AG04449 (cell line): ENCODE measurements at regions of chr12 and their contacts with region 1.

Region 1: GRCh38 chr12:101839324-101840283 is 8.8 kb upstream of the GNPTAB start:
- DNase-seq: no peak
- H3K4me3 ChIP-seq: no peak overlapping the region
- CTCF ChIP-seq: peak; percentile 82

Region 2: GRCh38 chr12:101759396-101760047 is 80.1 kb before region 1 on chr12:
- CTCF ChIA-PET with region 1: interaction called, 23 read pairs
- POLR2A ChIA-PET with region 1: no interaction called
- DNase-seq: no peak
- H3K4me3 ChIP-seq: no peak overlapping the region
- CTCF ChIP-seq: peak; percentile 55

Region 3: GRCh38 chr12:101783150-101783549 is 56.5 kb before region 1 on chr12:
- CTCF ChIA-PET with region 1: interaction called, 47 read pairs
- POLR2A ChIA-PET with region 1: no interaction called
- DNase-seq: no peak
- H3K4me3 ChIP-seq: no peak overlapping the region
- CTCF ChIP-seq: no peak

Region 4: DNA sequence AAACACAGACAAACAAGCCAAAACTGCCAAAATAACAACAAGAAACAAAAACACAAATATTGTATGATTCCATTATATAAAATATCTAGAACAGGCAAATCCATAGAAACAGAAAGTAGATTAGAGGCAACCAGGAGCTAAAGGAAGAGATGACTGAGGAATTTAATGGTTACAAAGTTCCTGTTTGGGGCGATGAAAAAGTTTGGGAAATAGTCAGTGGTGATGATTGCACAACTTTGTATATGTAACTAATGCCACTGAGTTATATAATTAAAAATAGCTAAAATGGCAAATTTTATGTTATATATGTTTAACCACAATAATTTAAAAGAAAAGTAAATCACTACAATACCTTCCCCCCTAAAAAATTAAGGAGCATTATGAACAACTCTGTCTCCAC is 33.3 kb before region 1 on chr12:
- CTCF ChIA-PET with region 1: interaction called, 10 read pairs
- POLR2A ChIA-PET with region 1: no interaction called
- DNase-seq: no peak
- H3K4me3 ChIP-seq: no peak overlapping the region
- CTCF ChIP-seq: no peak

Region 5: DNA sequence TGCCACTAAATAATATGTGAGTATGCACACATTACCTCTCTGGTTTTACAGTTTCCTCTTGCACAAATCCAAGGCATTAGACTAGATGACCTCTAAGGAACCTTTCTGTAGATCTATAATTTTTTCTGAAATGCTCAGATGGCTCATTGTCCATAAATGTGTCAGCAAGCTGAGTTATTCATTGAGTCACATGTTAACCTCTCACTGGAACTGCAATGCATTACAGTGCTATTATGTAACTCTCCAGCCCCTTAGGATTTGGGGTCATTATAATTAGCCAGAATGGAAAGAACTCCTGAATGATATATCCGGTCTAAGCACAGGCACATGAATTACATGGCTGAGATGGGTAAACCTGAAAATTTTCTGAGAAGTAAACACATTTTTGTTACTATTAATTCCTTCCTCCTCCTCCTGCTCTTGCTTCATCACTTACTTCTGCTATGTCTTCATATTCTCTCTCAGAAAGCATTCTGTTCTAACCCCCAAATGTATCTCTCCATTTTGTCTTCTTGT is 17.5 kb after region 1 on chr12:
- CTCF ChIA-PET with region 1: interaction called, 33 read pairs
- POLR2A ChIA-PET with region 1: no interaction called
- DNase-seq: peak; percentile 77
- H3K4me3 ChIP-seq: no peak overlapping the region
- CTCF ChIP-seq: no peak

Region 6: DNA sequence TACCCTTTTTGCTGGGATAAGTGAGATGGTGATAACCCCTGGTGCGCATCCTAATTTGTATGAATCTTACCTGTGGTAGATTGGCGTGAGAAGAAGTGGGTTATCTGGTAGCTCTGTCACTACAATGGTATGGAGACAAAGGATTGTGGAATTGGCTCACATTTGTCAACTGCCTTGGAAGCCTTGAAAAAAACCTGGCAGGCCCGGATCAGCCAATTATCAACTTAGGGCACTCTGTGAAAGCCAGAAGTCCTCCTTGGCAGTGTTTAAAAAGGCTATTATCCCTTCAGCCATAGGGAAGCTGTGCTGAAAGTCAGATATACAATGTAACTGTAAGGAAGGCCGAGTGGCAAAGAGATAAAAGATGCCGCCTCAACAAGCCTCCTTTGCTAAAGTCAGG is 165.7 kb after region 1 on chr12:
- CTCF ChIA-PET with region 1: no interaction called
- POLR2A ChIA-PET with region 1: no interaction called
- DNase-seq: no peak
- H3K4me3 ChIP-seq: no peak overlapping the region
- CTCF ChIP-seq: no peak